Heart right ventricle (tissue), 16 donors: ENCODE measurements at regions of chr1 and their contacts with region 1.

Region 1: GRCh38 chr1:107963601-107964335 is 1.2 kb downstream of the VAV3 start:
- DNase-seq: peak; percentile 19
- ATAC-seq: peak; percentile 19 to 71 (median 58)
- H3K4me3 ChIP-seq: peak overlapping the region; percentile 40 to 84 (median 66)
- H3K27ac ChIP-seq: peak overlapping the region; percentile 39 to 88 (median 71)
- H3K4me1 ChIP-seq: peaks cover 0 to 31% (median 13%) of the 10 kb centered on the region in 9 donors
- H3K27me3 ChIP-seq: peaks cover 0 to 12% (median 0%) of the 10 kb centered on the region in 7 donors
- CTCF ChIP-seq: no peak

Region 2: GRCh38 chr1:107897438-107898345 is 66.1 kb before region 1 on chr1:
- intact Hi-C with region 1: no loop called
- DNase-seq: no peak
- ATAC-seq: no peak
- H3K4me3 ChIP-seq: no peak overlapping the region
- H3K27ac ChIP-seq: peak overlapping the region in 2 of 10 donors; percentile 2 to 4
- H3K4me1 ChIP-seq: peaks cover 0 to 32% (median 7%) of the 10 kb centered on the region in 9 donors
- H3K27me3 ChIP-seq: no peaks in the 10 kb centered on the region
- CTCF ChIP-seq: peak in 2 of 9 donors; percentile 14 to 15

Region 3: GRCh38 chr1:108118018-108118902 is 154.5 kb after region 1 on chr1:
- intact Hi-C with region 1: loop called in 5 of 10 experiments (anchors 5 to 10 kb)
- DNase-seq: no peak
- ATAC-seq: peak in 5 of 8 donors; percentile 46 to 58 (median 54)
- H3K4me3 ChIP-seq: no peak overlapping the region
- H3K27ac ChIP-seq: no peak overlapping the region
- H3K4me1 ChIP-seq: peaks cover 0 to 36% (median 11%) of the 10 kb centered on the region in 9 donors
- H3K27me3 ChIP-seq: no peaks in the 10 kb centered on the region
- CTCF ChIP-seq: no peak